A549 (cell line): ENCODE measurements at regions of chr3 and their contacts with region 1.

Region 1: GRCh38 chr3:52407779-52408178 is 37.1 kb downstream of the SEMA3G start:
- DNase-seq: no peak
- ATAC-seq: no peak
- H3K4me3 ChIP-seq: no peak overlapping the region
- H3K27ac ChIP-seq: no peak overlapping the region
- H3K4me1 ChIP-seq: peaks cover 22% of the 10 kb centered on the region; the same call in 2 of the 3 replicates
- CTCF ChIP-seq: no peak
- EP300 ChIP-seq: no peak
- POLR2A ChIP-seq: no peak
- RAD21 ChIP-seq: no peak

Region 2: DNA sequence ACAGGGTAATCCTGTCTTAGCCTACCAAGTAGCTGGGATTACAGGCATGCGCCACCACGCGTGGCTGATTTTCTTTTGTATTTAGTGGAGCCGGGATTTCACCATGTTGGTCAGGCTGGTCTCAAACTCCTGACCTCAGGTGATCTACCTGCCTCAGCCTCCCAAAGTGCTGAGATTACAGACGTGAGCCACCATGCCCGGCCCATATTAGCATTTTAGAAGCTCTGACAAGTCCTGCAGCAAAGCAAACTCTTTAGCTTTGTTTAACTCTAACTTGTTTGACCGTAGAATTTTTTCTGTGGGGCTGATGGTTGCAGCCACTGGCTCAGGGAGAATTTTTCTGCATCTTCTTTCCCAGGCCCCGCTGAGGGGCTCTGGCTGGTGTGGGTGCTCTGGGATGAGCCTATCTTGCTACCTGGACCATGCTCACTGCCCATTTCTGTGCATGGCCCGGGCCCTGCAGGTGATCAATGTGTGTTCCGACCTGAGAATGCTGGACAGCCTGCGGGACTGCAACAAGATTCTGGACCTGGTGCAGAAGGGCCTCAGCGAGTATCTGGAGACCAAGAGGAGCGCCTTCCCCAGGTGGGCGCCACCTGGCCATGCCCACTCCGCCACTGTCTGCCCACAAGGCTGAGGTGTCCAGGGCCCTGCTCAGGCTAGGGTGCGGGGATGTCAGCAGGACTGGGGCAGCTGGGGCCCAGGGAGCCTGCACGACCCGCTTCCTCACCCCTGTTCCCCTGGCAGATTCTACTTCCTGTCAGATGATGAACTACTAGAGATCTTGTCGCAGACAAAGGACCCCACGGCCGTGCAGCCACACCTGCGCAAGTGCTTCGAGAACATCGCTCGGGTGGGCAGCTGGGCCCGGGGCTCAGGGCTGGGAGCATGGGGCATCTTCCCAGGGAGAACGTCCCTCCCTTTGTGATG is 50.4 kb before region 1 on chr3:
- CTCF ChIA-PET with region 1: no interaction called
- POLR2A ChIA-PET with region 1: no interaction called
- DNase-seq: no peak
- ATAC-seq: no peak
- H3K4me3 ChIP-seq: no peak overlapping the region
- H3K27ac ChIP-seq: no peak overlapping the region
- H3K4me1 ChIP-seq: no peaks in the 10 kb centered on the region
- CTCF ChIP-seq: no peak
- EP300 ChIP-seq: no peak
- POLR2A ChIP-seq: no peak
- RAD21 ChIP-seq: no peak

Region 3: DNA sequence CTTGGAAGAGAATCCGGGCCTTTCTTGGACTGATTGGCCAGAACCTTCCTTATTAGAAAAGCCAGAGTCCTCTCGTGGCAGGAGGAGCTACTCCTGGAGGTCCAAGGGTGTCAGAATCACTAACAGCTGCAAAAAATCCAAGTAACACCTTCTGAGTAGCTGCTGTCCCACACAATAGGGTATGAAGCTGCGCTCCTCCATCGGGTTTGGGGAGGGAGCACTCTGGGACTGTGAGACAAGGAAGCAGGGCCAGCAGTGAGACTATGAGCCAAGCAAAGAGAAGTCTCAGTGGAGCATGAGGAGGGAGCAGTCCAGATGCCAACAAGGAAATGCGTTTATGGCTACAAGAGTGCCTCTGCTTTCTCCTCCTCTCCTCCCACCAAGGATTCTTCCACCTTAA is 15.4 kb after region 1 on chr3:
- CTCF ChIA-PET with region 1: interaction called, 13 read pairs
- POLR2A ChIA-PET with region 1: no interaction called
- DNase-seq: no peak
- ATAC-seq: no peak
- H3K4me3 ChIP-seq: no peak overlapping the region
- H3K27ac ChIP-seq: no peak overlapping the region
- H3K4me1 ChIP-seq: no peaks in the 10 kb centered on the region
- CTCF ChIP-seq: no peak
- EP300 ChIP-seq: no peak
- POLR2A ChIP-seq: no peak
- RAD21 ChIP-seq: no peak

Region 4: GRCh38 chr3:52428151-52429005 is 20.6 kb after region 1 on chr3:
- CTCF ChIA-PET with region 1: interaction called, 13 read pairs
- POLR2A ChIA-PET with region 1: no interaction called
- DNase-seq: peak; percentile 45 to 61
- ATAC-seq: peak; percentile 93 to 98
- H3K4me3 ChIP-seq: no peak overlapping the region
- H3K27ac ChIP-seq: no peak overlapping the region
- H3K4me1 ChIP-seq: no peaks in the 10 kb centered on the region
- CTCF ChIP-seq: peak; percentile 68
- EP300 ChIP-seq: no peak
- POLR2A ChIP-seq: no peak
- RAD21 ChIP-seq: peak; percentile 64 to 74

Region 5: GRCh38 chr3:52444860-52445793 is 37.3 kb after region 1 on chr3 and contains the start of gene SEMA3G:
- CTCF ChIA-PET with region 1: interaction called, 60 read pairs
- POLR2A ChIA-PET with region 1: no interaction called
- DNase-seq: peak; percentile 50 to 72
- ATAC-seq: peak; percentile 79 to 93
- H3K4me3 ChIP-seq: no peak within 1 kb of the TSS
- H3K27ac ChIP-seq: peak within 1 kb of the TSS in 1 of 2 experiments; percentile 55; a peak in 2 of 6 replicates
- H3K4me1 ChIP-seq: peaks cover 6% of the 10 kb centered on the region
- CTCF ChIP-seq: no peak
- EP300 ChIP-seq: no peak
- POLR2A ChIP-seq: peak; percentile 44; the same call in 1 of the 2 replicates
- RAD21 ChIP-seq: no peak
- polyA plus RNA-seq, gene SEMA3G: 0.05 and 0.08 TPM in 2 replicates